Stomach (tissue), 19 donors: ENCODE measurements at regions of chr7 and their contacts with region 1.

Region 1: GRCh38 chr7:102272075-102272917 is 14.4 kb upstream of the SH2B2 start:
- DNase-seq: peak; percentile 82 to 89
- H3K4me3 ChIP-seq: no peak overlapping the region
- H3K27ac ChIP-seq: no peak overlapping the region
- H3K4me1 ChIP-seq: peaks cover 0 to 7% (median 5%) of the 10 kb centered on the region in 4 donors
- H3K27me3 ChIP-seq: no peaks in the 10 kb centered on the region
- CTCF ChIP-seq: peak in 5 of 7 experiments; percentile 65 to 90 (median 84)
- EP300 ChIP-seq: no peak
- POLR2A ChIP-seq: no peak

Region 2: GRCh38 chr7:101542527-101543241 is 729.6 kb before region 1 on chr7:
- intact Hi-C with region 1: loop called (anchors 5 kb)
- DNase-seq: peak; percentile 82 to 86
- H3K4me3 ChIP-seq: no peak overlapping the region
- H3K27ac ChIP-seq: no peak overlapping the region
- H3K4me1 ChIP-seq: peaks cover 0 to 11% (median 2%) of the 10 kb centered on the region in 4 donors
- H3K27me3 ChIP-seq: peaks cover 0 to 10% (median 0%) of the 10 kb centered on the region in 3 donors
- CTCF ChIP-seq: peak in 5 of 7 experiments; percentile 86 to 95 (median 93)
- EP300 ChIP-seq: no peak
- POLR2A ChIP-seq: no peak

Region 3: GRCh38 chr7:102310414-102310815 is 38.1 kb after region 1 on chr7:
- intact Hi-C with region 1: no loop called
- DNase-seq: no peak
- H3K4me3 ChIP-seq: no peak overlapping the region
- H3K27ac ChIP-seq: no peak overlapping the region
- H3K4me1 ChIP-seq: peaks cover 7 to 19% (median 10%) of the 10 kb centered on the region in 4 donors
- H3K27me3 ChIP-seq: no peaks in the 10 kb centered on the region
- CTCF ChIP-seq: no peak
- EP300 ChIP-seq: no peak
- POLR2A ChIP-seq: no peak